ENCODE measurements at regions of chr19 and their contacts with region 1.

Region 1: DNA sequence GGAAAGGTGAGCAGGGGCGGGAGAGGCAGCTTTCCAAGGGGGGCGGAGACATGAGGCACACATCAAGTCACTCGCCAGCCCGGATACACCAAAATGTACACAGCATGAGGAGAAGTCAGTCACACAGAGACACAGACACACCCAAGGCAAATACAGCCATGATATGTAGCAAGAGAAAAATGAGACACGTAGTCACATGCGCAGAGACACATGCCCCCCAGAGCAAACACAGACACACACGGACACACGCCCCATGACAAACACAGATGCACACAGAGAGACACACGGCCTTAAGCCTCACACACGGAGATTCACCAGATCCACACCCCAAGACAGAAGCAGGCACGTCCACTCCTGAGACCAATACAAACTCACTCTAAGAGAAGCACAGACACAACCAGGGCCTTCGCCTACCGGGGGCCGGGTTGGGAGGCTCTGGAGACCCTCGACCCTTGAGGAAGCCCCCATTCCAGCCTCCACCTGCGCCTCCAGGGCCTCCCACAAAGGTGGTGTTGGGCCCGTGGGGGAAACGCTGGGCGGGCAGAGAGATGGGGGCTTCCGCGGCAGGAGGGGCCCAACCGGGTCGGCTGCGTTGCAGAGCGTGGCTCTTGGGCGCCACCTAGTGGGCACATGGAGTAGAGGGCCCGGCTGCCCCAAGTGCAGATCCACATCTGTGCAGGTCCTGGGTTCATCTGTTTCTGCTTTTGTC is 10.2 kb upstream of the TINCR start:
- DNase-seq: no peak
- H3K4me3 ChIP-seq: peak overlapping the region in 1 of 4 donors; percentile 43
- H3K27ac ChIP-seq: no peak overlapping the region
- H3K4me1 ChIP-seq: peaks cover 5 to 11% (median 9%) of the 10 kb centered on the region in 4 donors
- H3K27me3 ChIP-seq: no peaks in the 10 kb centered on the region
- CTCF ChIP-seq: peak; percentile 85 to 99 (median 98)
- EP300 ChIP-seq: no peak
- POLR2A ChIP-seq: no peak

Region 2: GRCh38 chr19:5048091-5048726 is 529.7 kb before region 1 on chr19:
- intact Hi-C with region 1: loop called (anchors 5 kb)
- DNase-seq: no peak
- H3K4me3 ChIP-seq: peak overlapping the region in 2 of 4 donors; percentile 12 to 30
- H3K27ac ChIP-seq: peak overlapping the region in 1 of 4 donors; percentile 10
- H3K4me1 ChIP-seq: peaks cover 27 to 41% (median 34%) of the 10 kb centered on the region in 4 donors
- H3K27me3 ChIP-seq: no peaks in the 10 kb centered on the region
- CTCF ChIP-seq: peak in 2 of 3 experiments; percentile 96 to 97
- EP300 ChIP-seq: no peak
- POLR2A ChIP-seq: no peak

Region 3: GRCh38 chr19:5231857-5232503 is 346.0 kb before region 1 on chr19:
- intact Hi-C with region 1: loop called (anchors 10 kb)
- DNase-seq: no peak
- H3K4me3 ChIP-seq: no peak overlapping the region
- H3K27ac ChIP-seq: no peak overlapping the region
- H3K4me1 ChIP-seq: peaks cover 0 to 12% (median 4%) of the 10 kb centered on the region in 4 donors
- H3K27me3 ChIP-seq: no peaks in the 10 kb centered on the region
- CTCF ChIP-seq: no peak
- EP300 ChIP-seq: no peak
- POLR2A ChIP-seq: no peak

Region 4: GRCh38 chr19:5369962-5370367 is 208.0 kb before region 1 on chr19:
- intact Hi-C with region 1: loop called (anchors 10 kb)
- DNase-seq: no peak
- H3K4me3 ChIP-seq: no peak overlapping the region
- H3K27ac ChIP-seq: no peak overlapping the region
- H3K4me1 ChIP-seq: no peaks in the 10 kb centered on the region
- H3K27me3 ChIP-seq: peaks cover 0 to 72% (median 2%) of the 10 kb centered on the region in 4 donors
- CTCF ChIP-seq: peak; percentile 46 to 53 (median 51)
- EP300 ChIP-seq: no peak
- POLR2A ChIP-seq: no peak

Region 5: GRCh38 chr19:5665796-5666513 is 88.0 kb after region 1 on chr19:
- intact Hi-C with region 1: no loop called
- DNase-seq: no peak
- H3K4me3 ChIP-seq: no peak overlapping the region
- H3K27ac ChIP-seq: no peak overlapping the region
- H3K4me1 ChIP-seq: no peaks in the 10 kb centered on the region
- H3K27me3 ChIP-seq: no peaks in the 10 kb centered on the region
- CTCF ChIP-seq: no peak
- EP300 ChIP-seq: no peak
- POLR2A ChIP-seq: no peak

Measured in esophagus muscularis mucosa (tissue), 4 donors.